SK-N-SH (cell line): ENCODE measurements at regions of chr4 and their contacts with region 1.

Region 1: GRCh38 chr4:95549246-95550114 is 707 bp upstream of the UNC5C start:
- DNase-seq: peak; percentile 63
- H3K4me3 ChIP-seq: peak overlapping the region; percentile 82 to 95
- H3K27ac ChIP-seq: peak overlapping the region; percentile 64 to 98
- H3K4me1 ChIP-seq: peaks cover 0 to 13% of the 10 kb centered on the region in 2 experiments; a peak in 3 of 4 replicates
- H3K27me3 ChIP-seq: no peaks in the 10 kb centered on the region
- CTCF ChIP-seq: no peak
- EP300 ChIP-seq: no peak
- RAD21 ChIP-seq: no peak

Region 2: GRCh38 chr4:95510145-95510544 is 39.3 kb before region 1 on chr4:
- CTCF ChIA-PET with region 1: interaction called, 183 read pairs
- POLR2A ChIA-PET with region 1: interaction called, 14 read pairs
- DNase-seq: no peak
- H3K4me3 ChIP-seq: no peak overlapping the region
- H3K27ac ChIP-seq: peak overlapping the region; percentile 18 to 96; a peak in 3 of 4 replicates
- H3K4me1 ChIP-seq: peaks cover 13 to 54% of the 10 kb centered on the region in 2 experiments; a peak in 3 of 4 replicates
- H3K27me3 ChIP-seq: no peaks in the 10 kb centered on the region
- CTCF ChIP-seq: peak; percentile 74
- EP300 ChIP-seq: no peak
- RAD21 ChIP-seq: peak; percentile 80

Region 3: GRCh38 chr4:95516528-95517017 is 32.9 kb before region 1 on chr4:
- CTCF ChIA-PET with region 1: interaction called, 183 read pairs
- POLR2A ChIA-PET with region 1: interaction called, 14 read pairs
- DNase-seq: peak; percentile 60
- H3K4me3 ChIP-seq: peak overlapping the region; percentile 28 to 33; a peak in 3 of 4 replicates
- H3K27ac ChIP-seq: peak overlapping the region; percentile 80 to 100
- H3K4me1 ChIP-seq: peaks cover 0 to 60% of the 10 kb centered on the region in 2 experiments; a peak in 2 of 4 replicates
- H3K27me3 ChIP-seq: no peaks in the 10 kb centered on the region
- CTCF ChIP-seq: no peak
- EP300 ChIP-seq: peak; percentile 28 to 99; a peak in 3 of 4 replicates
- RAD21 ChIP-seq: peak; percentile 27

Region 4: GRCh38 chr4:95522682-95523530 is 26.6 kb before region 1 on chr4:
- CTCF ChIA-PET with region 1: interaction called, 114 read pairs
- POLR2A ChIA-PET with region 1: interaction called, 29 read pairs
- DNase-seq: no peak
- H3K4me3 ChIP-seq: no peak overlapping the region
- H3K27ac ChIP-seq: peak overlapping the region in 1 of 2 experiments; percentile 99; a peak in 2 of 4 replicates
- H3K4me1 ChIP-seq: peaks cover 8 to 54% of the 10 kb centered on the region in 2 experiments; a peak in 2 of 4 replicates
- H3K27me3 ChIP-seq: no peaks in the 10 kb centered on the region
- CTCF ChIP-seq: no peak
- EP300 ChIP-seq: no peak
- RAD21 ChIP-seq: no peak

Region 5: DNA sequence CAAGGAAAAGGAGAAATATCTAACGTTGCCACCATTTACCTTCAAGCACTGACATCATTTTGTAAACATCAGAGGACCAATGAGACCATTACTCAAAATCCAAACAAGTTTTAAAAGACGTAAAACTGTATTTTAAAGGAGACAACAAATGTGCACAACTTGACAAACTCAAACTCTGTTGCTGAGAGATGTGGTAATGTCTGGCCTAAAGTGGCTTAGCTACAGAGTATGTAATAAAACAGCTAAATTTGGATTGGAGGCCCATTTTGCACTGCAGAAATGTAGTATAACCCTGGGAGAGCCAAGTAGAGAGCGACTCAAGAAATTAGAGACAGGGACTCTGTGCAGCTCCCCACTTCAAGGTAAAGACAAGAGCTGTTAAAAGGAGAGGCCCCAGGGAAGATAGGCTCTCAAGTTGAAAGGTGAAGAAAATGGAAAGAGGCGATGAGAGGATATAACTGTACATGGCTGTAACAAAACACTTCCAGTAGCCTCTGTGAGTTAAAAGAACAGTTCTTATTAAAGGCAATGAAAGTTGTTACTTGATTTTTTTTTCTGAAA is 21.0 kb before region 1 on chr4:
- CTCF ChIA-PET with region 1: interaction called, 114 read pairs
- POLR2A ChIA-PET with region 1: interaction called, 29 read pairs
- DNase-seq: no peak
- H3K4me3 ChIP-seq: no peak overlapping the region
- H3K27ac ChIP-seq: peak overlapping the region; percentile 16 to 99; a peak in 3 of 4 replicates
- H3K4me1 ChIP-seq: peaks cover 34 to 88% of the 10 kb centered on the region in 2 experiments; a peak in 3 of 4 replicates
- H3K27me3 ChIP-seq: no peaks in the 10 kb centered on the region
- CTCF ChIP-seq: no peak
- EP300 ChIP-seq: no peak
- RAD21 ChIP-seq: no peak

Region 6: DNA sequence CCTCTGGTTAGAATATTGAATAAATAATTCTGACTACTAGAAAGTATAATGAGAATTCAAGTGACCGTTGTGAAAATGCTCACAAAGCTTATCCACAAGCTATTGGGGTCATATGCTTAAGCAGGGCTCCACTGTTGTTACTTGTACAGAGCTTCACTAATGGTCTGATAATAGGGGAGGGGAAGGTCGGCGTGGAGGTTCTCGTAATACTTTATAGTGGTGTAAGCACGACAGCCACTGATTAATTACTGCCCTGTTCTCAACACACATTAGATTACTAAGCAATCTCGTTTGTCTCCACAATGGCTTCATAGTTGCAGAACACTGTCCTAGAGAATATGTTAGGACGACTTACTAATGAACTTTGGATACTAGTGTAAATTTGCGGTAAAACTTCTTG is 12.3 kb before region 1 on chr4:
- CTCF ChIA-PET with region 1: interaction called, 42 read pairs
- POLR2A ChIA-PET with region 1: interaction called, 39 read pairs
- DNase-seq: no peak
- H3K4me3 ChIP-seq: peak overlapping the region; percentile 26 to 31; a peak in 3 of 4 replicates
- H3K27ac ChIP-seq: peak overlapping the region; percentile 55 to 98
- H3K4me1 ChIP-seq: peaks cover 5 to 56% of the 10 kb centered on the region in 2 experiments; a peak in 3 of 4 replicates
- H3K27me3 ChIP-seq: no peaks in the 10 kb centered on the region
- CTCF ChIP-seq: no peak
- EP300 ChIP-seq: peak in 1 of 2 experiments; percentile 67; a peak in 1 of 4 replicates
- RAD21 ChIP-seq: 0 out of 2 replicates have a peak, but pooled peaks have one; percentile 16